Activated CD4-positive, alpha-beta T cell treated with anti-CD3 and anti-CD28 coated beads, Interleukin-2, amount 10 ng/mL, durations not matched to agents 24 days and 14 days (primary cell): ENCODE measurements at regions of chr6 and their contacts with region 1.

Region 1: GRCh38 chr6:31139599-31139998 is 733 bp upstream of the PSORS1C2 start:
- DNase-seq: no peak
- H3K4me3 Mint-ChIP-seq: no peak overlapping the region
- H3K27ac Mint-ChIP-seq: no peak overlapping the region
- H3K4me1 Mint-ChIP-seq: peaks cover 4% of the 10 kb centered on the region
- H3K27me3 Mint-ChIP-seq: peaks cover 6% of the 10 kb centered on the region

Region 2: DNA sequence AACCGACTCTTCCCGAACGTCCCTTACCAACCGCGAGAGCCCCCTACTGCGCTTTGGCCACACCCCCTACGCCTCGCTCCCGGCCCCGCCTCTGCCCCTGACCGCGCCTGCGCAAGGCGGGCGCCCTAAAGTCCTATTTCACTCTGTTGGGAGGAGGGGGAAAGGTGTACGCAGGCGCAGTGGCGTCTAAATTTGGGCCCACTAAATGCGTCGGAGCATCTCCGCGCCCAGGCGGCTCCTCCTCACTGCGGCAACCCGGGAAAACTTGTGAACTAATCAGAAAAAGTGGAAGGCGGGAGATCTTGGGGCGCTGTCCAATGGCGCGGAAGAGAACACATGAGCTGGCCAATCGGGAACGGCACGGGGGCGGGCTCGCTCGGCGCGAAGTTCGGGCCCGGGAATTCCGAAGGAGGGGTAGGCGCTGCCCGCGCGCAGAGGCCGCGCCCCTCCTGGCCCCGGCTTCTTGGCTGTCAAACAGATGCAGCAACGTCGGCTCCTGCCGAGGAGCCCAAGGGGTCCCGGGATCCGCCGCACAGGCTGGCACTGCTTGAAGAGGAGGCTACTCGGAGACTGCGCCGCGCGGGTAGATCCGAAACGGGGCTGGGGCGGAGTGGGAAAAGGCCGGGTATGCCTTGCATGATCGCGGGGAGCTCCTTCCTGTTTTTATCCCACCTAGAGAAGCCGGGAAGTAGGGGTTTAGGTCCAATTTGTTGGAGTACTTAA is 18.7 kb after region 1 on chr6 and contains the start of gene TCF19:
- intact Hi-C with region 1: loop called (anchors 2 kb)
- DNase-seq: peak; percentile 100
- H3K4me3 Mint-ChIP-seq: peak within 1 kb of the TSS; percentile 97
- H3K27ac Mint-ChIP-seq: peak within 1 kb of the TSS; percentile 89
- H3K4me1 Mint-ChIP-seq: peaks cover 41% of the 10 kb centered on the region
- H3K27me3 Mint-ChIP-seq: peaks cover 3% of the 10 kb centered on the region
- total RNA-seq, gene TCF19: 79.5 and 82.6 TPM in 2 replicates

Region 3: DNA sequence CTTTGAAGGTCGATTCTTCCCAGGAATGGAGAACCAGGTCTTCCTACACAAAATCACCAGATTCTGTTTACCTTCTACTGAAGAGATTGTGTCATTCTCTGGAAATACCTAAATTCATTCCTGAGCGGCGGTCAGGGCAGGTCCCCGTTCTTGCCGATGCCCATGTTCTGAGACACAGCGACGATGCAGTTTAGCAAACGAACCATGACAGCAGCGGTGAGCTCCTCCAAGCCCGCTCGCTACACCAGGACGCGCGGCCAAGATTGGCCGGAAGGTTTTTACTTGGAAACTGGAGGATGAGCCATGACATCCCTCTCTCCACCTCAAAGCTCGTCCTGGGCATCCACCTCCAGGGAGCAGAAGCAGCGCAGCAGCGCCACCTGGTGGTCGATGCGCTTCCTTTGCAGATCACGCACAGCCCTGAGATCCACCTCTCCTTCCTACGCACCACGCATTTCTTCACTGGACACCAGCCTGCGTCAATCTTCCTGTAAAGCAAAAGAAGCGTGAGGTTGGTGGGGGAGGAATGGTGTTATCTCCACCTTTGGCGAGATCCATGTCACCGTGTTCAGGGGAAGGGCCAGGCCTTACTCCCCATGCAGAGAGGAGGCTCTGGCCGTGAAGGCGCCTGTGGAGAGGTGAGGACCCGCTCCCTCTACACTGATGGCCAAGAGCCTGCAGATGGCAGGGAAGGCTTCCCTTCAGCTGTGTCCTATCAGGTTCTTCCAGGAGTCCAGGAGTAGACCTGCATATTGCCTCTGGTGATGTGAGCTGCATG is 227.3 kb after region 1 on chr6:
- intact Hi-C with region 1: loop called (anchors 1 kb)
- DNase-seq: peak; percentile 96
- H3K4me3 Mint-ChIP-seq: peak overlapping the region; percentile 79
- H3K27ac Mint-ChIP-seq: peak overlapping the region; percentile 42
- H3K4me1 Mint-ChIP-seq: peaks cover 13% of the 10 kb centered on the region
- H3K27me3 Mint-ChIP-seq: peaks cover 58% of the 10 kb centered on the region